ENCODE measurements at regions of chr12 and their contacts with region 1.

Region 1: GRCh38 chr12:64544371-64545080 is 65.8 kb upstream of the RASSF3 start:
- DNase-seq: no peak
- CTCF ChIP-seq: no peak

Region 2: GRCh38 chr12:64696080-64696741 is 151.7 kb after region 1 on chr12:
- in situ Hi-C with region 1: loop called (anchors 5 kb)
- DNase-seq: no peak
- CTCF ChIP-seq: no peak